Activated CD8-positive, alpha-beta T cell treated with anti-CD3 and anti-CD28 coated beads for 36 hours (primary cell): ENCODE measurements at regions of chr10 and their contacts with region 1.

Region 1: GRCh38 chr10:72337020-72337629 is 17.6 kb downstream of the DNAJB12 start:
- DNase-seq: peak; percentile 71
- ATAC-seq: no peak
- H3K4me3 Mint-ChIP-seq: no peak overlapping the region
- H3K27ac Mint-ChIP-seq: peak overlapping the region; percentile 84
- H3K4me1 Mint-ChIP-seq: peaks cover 63% of the 10 kb centered on the region
- H3K27me3 Mint-ChIP-seq: no peaks in the 10 kb centered on the region
- CTCF ChIP-seq: peak; percentile 100

Region 2: GRCh38 chr10:72133517-72133916 is 203.6 kb before region 1 on chr10:
- CTCF ChIA-PET with region 1: interaction called, 21 read pairs
- POLR2A ChIA-PET with region 1: no interaction called
- intact Hi-C with region 1: no loop called
- DNase-seq: no peak
- ATAC-seq: no peak
- H3K4me3 Mint-ChIP-seq: no peak overlapping the region
- H3K27ac Mint-ChIP-seq: peak overlapping the region; percentile 0
- H3K4me1 Mint-ChIP-seq: peaks cover 35% of the 10 kb centered on the region
- H3K27me3 Mint-ChIP-seq: no peaks in the 10 kb centered on the region
- CTCF ChIP-seq: no peak

Region 3: DNA sequence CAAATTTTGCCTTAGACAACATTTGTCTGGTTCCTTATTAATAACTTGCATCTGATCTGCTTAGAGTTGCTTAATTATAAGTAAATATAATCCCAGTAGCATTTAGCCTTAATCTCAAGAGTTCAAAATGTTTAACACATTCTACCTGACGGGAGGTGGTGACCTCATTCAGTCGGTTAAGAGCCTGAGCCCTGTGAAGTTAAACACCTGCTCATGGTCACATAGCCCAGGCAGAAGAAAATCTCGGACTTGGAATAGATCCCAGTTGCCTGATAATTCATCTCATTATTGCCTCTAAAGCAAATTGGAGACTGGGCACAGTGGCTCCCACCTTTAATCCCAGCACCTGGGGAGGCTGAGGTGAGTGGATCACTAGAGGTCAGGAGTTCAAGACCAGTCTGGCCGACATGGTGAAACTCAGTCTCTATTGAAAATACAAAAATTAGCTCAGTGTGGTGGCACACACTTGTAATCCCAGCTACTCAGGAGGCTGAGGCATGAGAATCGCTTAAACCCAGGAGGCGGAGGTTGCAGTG is 102.5 kb before region 1 on chr10:
- CTCF ChIA-PET with region 1: interaction called, 10 read pairs
- POLR2A ChIA-PET with region 1: interaction called, 4 read pairs
- intact Hi-C with region 1: no loop called
- DNase-seq: no peak
- ATAC-seq: no peak
- H3K4me3 Mint-ChIP-seq: no peak overlapping the region
- H3K27ac Mint-ChIP-seq: no peak overlapping the region
- H3K4me1 Mint-ChIP-seq: peaks cover 9% of the 10 kb centered on the region
- H3K27me3 Mint-ChIP-seq: no peaks in the 10 kb centered on the region
- CTCF ChIP-seq: no peak

Region 4: GRCh38 chr10:72292223-72292691 is 44.9 kb before region 1 on chr10:
- CTCF ChIA-PET with region 1: interaction called, 25 read pairs
- POLR2A ChIA-PET with region 1: interaction called, 796 read pairs
- intact Hi-C with region 1: loop called (anchors 5 kb)
- DNase-seq: peak; percentile 88
- ATAC-seq: peak; percentile 54
- H3K4me3 Mint-ChIP-seq: peak overlapping the region; percentile 41
- H3K27ac Mint-ChIP-seq: peak overlapping the region; percentile 99
- H3K4me1 Mint-ChIP-seq: peaks cover 55% of the 10 kb centered on the region
- H3K27me3 Mint-ChIP-seq: no peaks in the 10 kb centered on the region
- CTCF ChIP-seq: no peak

Region 5: DNA sequence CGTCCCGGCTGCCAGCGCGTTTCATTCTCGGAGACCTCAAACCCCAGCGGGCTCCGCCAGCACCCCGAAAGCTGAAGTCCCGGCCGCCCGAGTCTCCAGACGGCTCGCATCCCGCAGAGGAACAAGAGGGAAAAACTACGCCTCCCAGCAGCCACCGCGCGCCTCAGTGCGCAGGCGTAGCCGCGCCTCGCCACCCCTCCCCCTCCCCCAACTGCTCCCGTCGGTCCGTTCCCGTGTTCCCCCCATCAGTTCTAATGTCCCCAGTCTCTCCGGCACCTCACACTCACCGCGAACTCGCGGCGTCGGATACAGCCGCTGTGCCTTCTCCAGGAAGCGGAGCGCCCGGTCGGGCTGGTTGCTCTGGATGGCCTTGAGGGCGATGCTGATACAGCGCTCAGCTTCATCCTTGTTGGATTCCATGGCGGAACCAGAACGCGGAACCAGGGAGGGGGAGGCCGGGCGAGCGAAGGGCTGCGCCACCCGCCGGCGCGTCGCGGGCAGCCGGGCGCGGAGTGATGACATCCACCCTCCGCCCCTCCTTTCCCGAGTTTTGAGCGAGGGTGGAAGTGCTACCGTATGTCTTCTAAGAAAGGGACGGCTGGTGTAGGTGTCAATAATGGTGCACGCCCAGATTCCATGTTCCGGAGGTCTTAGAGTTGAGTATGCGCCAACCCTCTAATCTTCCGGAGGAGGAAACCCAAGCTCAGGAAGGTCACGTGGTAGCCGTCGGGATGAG is 17.5 kb after region 1 on chr10 and contains the start of gene DNAJB12:
- CTCF ChIA-PET with region 1: interaction called, 97 read pairs
- POLR2A ChIA-PET with region 1: interaction called, 57 read pairs
- intact Hi-C with region 1: no loop called
- DNase-seq: peak; percentile 91
- ATAC-seq: peak; percentile 87
- H3K4me3 Mint-ChIP-seq: peak within 1 kb of the TSS; percentile 96
- H3K27ac Mint-ChIP-seq: peak within 1 kb of the TSS; percentile 99
- H3K4me1 Mint-ChIP-seq: peaks cover 36% of the 10 kb centered on the region
- H3K27me3 Mint-ChIP-seq: no peaks in the 10 kb centered on the region
- CTCF ChIP-seq: no peak
- total RNA-seq, gene DNAJB12: 17.1 to 17.5 TPM

Region 6: DNA sequence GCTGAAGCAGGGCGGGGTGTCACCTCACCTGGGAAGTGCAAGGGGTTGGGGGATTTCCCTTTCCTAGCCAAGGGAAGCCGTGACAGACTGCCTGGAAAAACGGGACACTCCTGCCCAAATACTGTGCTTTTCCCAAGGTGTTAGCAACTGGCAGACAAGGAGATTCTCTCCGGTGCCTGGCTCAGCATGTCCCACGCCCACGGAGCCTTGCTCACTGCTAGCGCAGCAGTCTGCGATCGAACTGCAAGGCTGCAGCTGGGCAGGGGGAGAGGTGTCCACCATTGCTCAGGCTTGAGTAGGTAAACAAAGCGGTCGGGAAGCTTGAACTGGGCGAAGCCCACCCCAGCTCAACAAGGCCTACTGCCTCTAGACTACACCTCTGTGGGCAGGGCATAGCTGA is 98.4 kb after region 1 on chr10:
- CTCF ChIA-PET with region 1: no interaction called
- POLR2A ChIA-PET with region 1: no interaction called
- intact Hi-C with region 1: no loop called
- DNase-seq: no peak
- ATAC-seq: no peak
- H3K4me3 Mint-ChIP-seq: no peak overlapping the region
- H3K27ac Mint-ChIP-seq: no peak overlapping the region
- H3K4me1 Mint-ChIP-seq: no peaks in the 10 kb centered on the region
- H3K27me3 Mint-ChIP-seq: no peaks in the 10 kb centered on the region
- CTCF ChIP-seq: no peak

Region 7: GRCh38 chr10:72625608-72626443 is 288.7 kb after region 1 on chr10 and contains the start of gene MICU1:
- CTCF ChIA-PET with region 1: no interaction called
- POLR2A ChIA-PET with region 1: no interaction called
- intact Hi-C with region 1: no loop called
- DNase-seq: peak; percentile 98
- ATAC-seq: peak; percentile 99
- H3K4me3 Mint-ChIP-seq: peak within 1 kb of the TSS; percentile 90
- H3K27ac Mint-ChIP-seq: peak within 1 kb of the TSS; percentile 91
- H3K4me1 Mint-ChIP-seq: peaks cover 11% of the 10 kb centered on the region
- H3K27me3 Mint-ChIP-seq: no peaks in the 10 kb centered on the region
- CTCF ChIP-seq: no peak
- total RNA-seq, gene MICU1: 29.9 to 31.0 TPM